ENCODE measurements at regions of chr2 and their contacts with region 1.

Region 1: GRCh38 chr2:237441605-237442274 is 27.8 kb upstream of the COL6A3 start:
- DNase-seq: no peak
- ATAC-seq: peak; percentile 33
- H3K4me3 Mint-ChIP-seq: no peak overlapping the region
- H3K27ac Mint-ChIP-seq: no peak overlapping the region
- H3K4me1 Mint-ChIP-seq: peaks cover 28% of the 10 kb centered on the region
- H3K27me3 Mint-ChIP-seq: peaks cover 2% of the 10 kb centered on the region

Region 2: GRCh38 chr2:237128026-237128703 is 313.6 kb before region 1 on chr2:
- CTCF ChIA-PET with region 1: no interaction called
- POLR2A ChIA-PET with region 1: no interaction called
- DNase-seq: peak; percentile 27
- ATAC-seq: no peak
- H3K4me3 Mint-ChIP-seq: no peak overlapping the region
- H3K27ac Mint-ChIP-seq: no peak overlapping the region
- H3K4me1 Mint-ChIP-seq: no peaks in the 10 kb centered on the region
- H3K27me3 Mint-ChIP-seq: no peaks in the 10 kb centered on the region

Region 3: GRCh38 chr2:237427769-237428506 is 13.8 kb before region 1 on chr2:
- CTCF ChIA-PET with region 1: interaction called, 32 read pairs
- POLR2A ChIA-PET with region 1: interaction called, 6 read pairs
- DNase-seq: peak; percentile 59
- ATAC-seq: peak; percentile 50
- H3K4me3 Mint-ChIP-seq: no peak overlapping the region
- H3K27ac Mint-ChIP-seq: peak overlapping the region; percentile 51
- H3K4me1 Mint-ChIP-seq: peaks cover 54% of the 10 kb centered on the region
- H3K27me3 Mint-ChIP-seq: peaks cover 14% of the 10 kb centered on the region

Measured in activated CD8-positive, alpha-beta T cell treated with anti-CD3 and anti-CD28 coated beads, Interleukin-2, amount 10 ng/mL, durations not matched to agents 7 days and 5 days (primary cell).